ENCODE measurements at regions of chrX and their contacts with region 1.

Region 1: GRCh38 chrX:53224860-53225797 is at the start of gene KDM5C:
- DNase-seq: peak; percentile 83 to 91
- H3K4me3 ChIP-seq: peak within 1 kb of the TSS; percentile 86 to 94
- H3K27ac ChIP-seq: peak within 1 kb of the TSS; percentile 85 to 92
- H3K4me1 ChIP-seq: peaks cover 0 to 26% (median 20%) of the 10 kb centered on the region in 4 donors
- H3K27me3 ChIP-seq: no peaks in the 10 kb centered on the region
- CTCF ChIP-seq: no peak

Region 2: GRCh38 chrX:53433651-53434639 is 208.8 kb after region 1 on chrX and contains the start of gene HSD17B10:
- intact Hi-C with region 1: loop called (anchors 10 kb)
- DNase-seq: peak; percentile 89 to 93
- H3K4me3 ChIP-seq: peak within 1 kb of the TSS; percentile 62 to 67
- H3K27ac ChIP-seq: peak within 1 kb of the TSS; percentile 76 to 84
- H3K4me1 ChIP-seq: peaks cover 0 to 5% (median 4%) of the 10 kb centered on the region in 4 donors
- H3K27me3 ChIP-seq: no peaks in the 10 kb centered on the region
- CTCF ChIP-seq: no peak